ENCODE measurements at regions of chr11 and their contacts with region 1.

Region 1: DNA sequence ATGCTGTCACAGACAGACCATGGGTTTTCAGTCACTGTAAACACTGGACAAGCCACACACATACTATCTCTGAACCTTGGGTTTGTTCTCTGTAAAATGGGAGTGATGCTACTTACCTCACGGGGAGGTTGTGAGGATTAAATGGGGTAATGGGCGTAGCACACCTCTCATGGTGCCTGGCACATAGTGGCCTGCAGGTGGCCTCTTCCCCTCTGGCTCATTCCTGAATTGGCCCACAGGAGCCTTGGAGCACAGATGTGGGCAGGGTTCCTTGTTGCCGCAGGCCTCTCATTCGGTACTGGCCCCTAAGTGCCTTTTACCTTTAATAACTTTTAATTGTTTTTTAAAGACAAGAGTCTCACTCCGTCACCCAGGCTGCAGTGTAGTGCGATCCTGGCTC is 11.7 kb downstream of the MICAL2 start:
- DNase-seq: no peak
- H3K4me3 ChIP-seq: no peak overlapping the region
- H3K27me3 ChIP-seq: no peaks in the 10 kb centered on the region
- CTCF ChIP-seq: peak; percentile 30; the same call in 1 of the 2 replicates

Region 2: GRCh38 chr11:12102588-12103410 is 19.3 kb before region 1 on chr11:
- CTCF ChIA-PET with region 1: no interaction called
- POLR2A ChIA-PET with region 1: no interaction called
- DNase-seq: no peak
- H3K4me3 ChIP-seq: no peak overlapping the region
- H3K27me3 ChIP-seq: no peaks in the 10 kb centered on the region
- CTCF ChIP-seq: 0 out of 2 replicates have a peak, but pooled peaks have one; percentile 15

Region 3: GRCh38 chr11:12235947-12236743 is 114.1 kb after region 1 on chr11:
- CTCF ChIA-PET with region 1: interaction called, 27 read pairs
- POLR2A ChIA-PET with region 1: no interaction called
- DNase-seq: no peak
- H3K4me3 ChIP-seq: no peak overlapping the region
- H3K27me3 ChIP-seq: no peaks in the 10 kb centered on the region
- CTCF ChIP-seq: peak; percentile 66

Measured in BJ (cell line).